BJ (cell line): ENCODE measurements at regions of chr9 and their contacts with region 1.

Region 1: GRCh38 chr9:34675048-34675714 is 12.7 kb upstream of the CCL27 start:
- DNase-seq: no peak
- H3K4me3 ChIP-seq: no peak overlapping the region
- H3K27me3 ChIP-seq: no peaks in the 10 kb centered on the region
- CTCF ChIP-seq: peak; percentile 88

Region 2: GRCh38 chr9:34686231-34686630 is 11.1 kb after region 1 on chr9:
- CTCF ChIA-PET with region 1: interaction called, 17 read pairs
- POLR2A ChIA-PET with region 1: no interaction called
- DNase-seq: no peak
- H3K4me3 ChIP-seq: no peak overlapping the region
- H3K27me3 ChIP-seq: no peaks in the 10 kb centered on the region
- CTCF ChIP-seq: no peak

Region 3: GRCh38 chr9:34773346-34773745 is 98.2 kb after region 1 on chr9:
- CTCF ChIA-PET with region 1: no interaction called
- POLR2A ChIA-PET with region 1: no interaction called
- DNase-seq: no peak
- H3K4me3 ChIP-seq: no peak overlapping the region
- H3K27me3 ChIP-seq: no peaks in the 10 kb centered on the region
- CTCF ChIP-seq: no peak

Region 4: DNA sequence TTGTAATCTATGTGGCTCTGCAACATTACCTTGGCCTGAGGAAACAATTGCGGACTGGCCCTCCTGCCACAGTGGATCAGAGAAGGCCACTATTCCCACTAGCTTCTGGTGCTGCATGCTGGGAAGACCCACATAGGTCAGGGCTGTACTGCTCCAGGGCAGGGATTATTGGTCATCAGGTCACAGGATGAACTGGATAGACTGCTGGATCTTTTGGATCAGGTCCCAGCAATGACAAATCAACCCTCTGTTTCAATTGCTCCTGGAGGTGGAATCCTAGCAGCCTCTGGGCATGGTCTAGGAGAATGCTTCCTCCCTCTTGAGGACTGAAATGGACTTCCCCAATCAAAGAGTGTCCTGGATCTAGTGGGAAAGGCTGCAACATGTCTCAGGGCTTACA is 216.2 kb after region 1 on chr9:
- CTCF ChIA-PET with region 1: no interaction called
- POLR2A ChIA-PET with region 1: no interaction called
- DNase-seq: no peak
- H3K4me3 ChIP-seq: no peak overlapping the region
- H3K27me3 ChIP-seq: peaks cover 15% of the 10 kb centered on the region
- CTCF ChIP-seq: no peak

Region 5: GRCh38 chr9:35060548-35061207 is 385.5 kb after region 1 on chr9:
- CTCF ChIA-PET with region 1: no interaction called
- POLR2A ChIA-PET with region 1: no interaction called
- DNase-seq: no peak
- H3K4me3 ChIP-seq: no peak overlapping the region
- H3K27me3 ChIP-seq: no peaks in the 10 kb centered on the region
- CTCF ChIP-seq: no peak